Activated CD8-positive, alpha-beta T cell treated with anti-CD3 and anti-CD28 coated beads for 36 hours (primary cell): ENCODE measurements at regions of chr7 and their contacts with region 1.

Region 1: DNA sequence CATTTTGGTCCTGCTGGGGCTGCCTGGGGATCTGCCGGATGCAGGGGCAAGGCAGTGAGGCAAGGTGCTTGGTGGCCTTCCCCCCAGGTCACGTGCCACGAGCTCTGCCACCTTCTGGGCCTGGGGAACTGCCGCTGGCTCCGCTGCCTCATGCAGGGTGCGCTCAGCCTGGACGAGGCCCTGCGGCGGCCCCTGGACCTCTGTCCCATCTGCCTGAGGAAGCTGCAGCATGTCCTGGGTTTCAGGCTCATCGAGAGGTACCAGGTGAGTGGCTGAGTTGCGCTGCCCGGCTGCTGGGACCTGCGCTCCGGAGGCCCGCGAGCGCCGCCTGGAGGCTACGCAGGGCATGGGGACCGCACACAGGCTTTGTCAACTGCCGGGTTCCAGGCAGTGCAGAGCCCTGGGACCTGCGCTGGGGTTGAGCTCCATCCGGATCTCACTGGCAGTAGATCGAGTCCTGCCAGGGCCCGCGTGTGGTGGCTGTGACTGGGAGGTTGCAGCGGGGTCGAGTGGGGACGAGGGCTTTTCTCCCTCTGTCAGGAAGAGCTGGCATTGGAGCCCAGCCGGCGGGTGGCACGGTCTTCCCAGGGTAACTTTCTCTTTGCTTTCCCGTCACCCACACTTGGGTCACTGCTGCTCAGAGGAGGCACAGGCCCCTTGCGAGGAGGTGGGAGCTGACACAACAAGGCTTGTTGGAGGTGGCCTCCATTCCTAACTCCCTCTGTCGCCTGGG is 21.7 kb downstream of the AMZ1 start:
- DNase-seq: peak; percentile 88
- ATAC-seq: peak; percentile 90
- H3K4me3 Mint-ChIP-seq: peak overlapping the region; percentile 59
- H3K27ac Mint-ChIP-seq: peak overlapping the region; percentile 55
- H3K4me1 Mint-ChIP-seq: peaks cover 31% of the 10 kb centered on the region
- H3K27me3 Mint-ChIP-seq: peaks cover 14% of the 10 kb centered on the region
- CTCF ChIP-seq: peak; percentile 97

Region 2: DNA sequence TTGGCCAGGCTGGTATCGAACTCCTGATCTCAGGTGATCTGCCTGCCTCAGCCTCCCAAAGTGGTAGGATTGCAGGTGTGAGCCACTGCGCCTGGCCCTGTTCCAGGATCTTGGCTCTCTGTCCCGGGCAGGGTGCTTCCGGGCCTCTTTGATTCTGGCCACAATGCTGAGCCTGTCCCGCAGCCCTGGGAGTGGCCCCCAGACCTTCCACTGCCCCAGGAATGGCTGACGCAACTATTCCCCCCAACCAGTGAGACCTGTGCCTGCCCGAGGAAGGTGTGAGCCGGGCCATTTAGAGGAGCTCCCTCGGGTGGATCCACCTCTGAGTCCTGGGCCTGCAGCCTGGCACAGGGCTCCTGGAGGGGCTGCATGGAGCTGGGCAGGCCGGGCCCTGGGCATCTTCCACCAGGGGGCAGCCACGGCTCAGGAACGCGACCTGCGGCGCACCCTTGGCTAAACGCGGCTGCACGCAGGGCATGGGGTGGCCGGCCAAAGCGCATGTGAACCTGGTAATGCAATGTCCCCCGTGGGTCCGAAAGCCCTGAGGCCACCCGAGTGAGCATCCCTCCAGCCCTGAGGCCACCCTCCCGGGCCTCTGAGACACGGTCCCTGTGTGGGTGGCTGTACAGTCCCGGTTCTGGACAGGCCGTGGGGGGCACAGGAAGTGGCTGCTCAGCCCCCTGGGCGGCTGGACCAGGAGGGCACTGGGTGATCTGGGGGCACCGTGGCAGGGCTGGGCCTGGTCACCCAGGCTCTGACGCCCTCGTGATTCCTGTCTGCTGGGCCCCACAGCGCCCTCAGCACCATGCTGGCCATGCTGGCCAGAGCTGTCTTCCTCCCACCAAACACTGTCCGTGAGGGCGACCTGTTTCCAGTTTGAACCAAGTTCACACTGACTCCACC is 258.3 kb before region 1 on chr7:
- CTCF ChIA-PET with region 1: interaction called, 22 read pairs
- POLR2A ChIA-PET with region 1: no interaction called
- intact Hi-C with region 1: no loop called
- DNase-seq: peak; percentile 88
- ATAC-seq: peak; percentile 96
- H3K4me3 Mint-ChIP-seq: peak overlapping the region; percentile 49
- H3K27ac Mint-ChIP-seq: peak overlapping the region; percentile 46
- H3K4me1 Mint-ChIP-seq: peaks cover 6% of the 10 kb centered on the region
- H3K27me3 Mint-ChIP-seq: peaks cover 2% of the 10 kb centered on the region
- CTCF ChIP-seq: peak; percentile 79

Region 3: DNA sequence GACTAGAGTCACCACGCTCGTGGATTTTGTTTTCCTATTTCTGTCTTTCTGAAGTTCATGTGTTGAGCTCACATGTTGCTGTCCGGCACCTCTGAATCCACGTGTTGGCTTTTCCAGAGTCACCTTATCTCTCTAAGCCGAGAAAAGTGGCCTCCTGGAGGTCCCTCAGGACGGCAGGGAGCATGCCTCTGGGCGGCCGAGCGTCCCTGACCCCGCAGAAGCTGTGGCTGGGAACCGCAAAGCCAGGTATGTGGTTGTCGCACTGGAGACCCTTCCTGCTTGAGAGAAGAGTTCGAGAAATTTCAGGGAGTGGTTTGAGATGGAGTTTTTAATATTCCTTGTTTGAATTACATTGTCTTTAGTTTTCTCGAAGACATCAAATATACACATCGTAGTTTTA is 138.3 kb before region 1 on chr7:
- CTCF ChIA-PET with region 1: no interaction called
- POLR2A ChIA-PET with region 1: no interaction called
- intact Hi-C with region 1: no loop called
- DNase-seq: no peak
- ATAC-seq: no peak
- H3K4me3 Mint-ChIP-seq: no peak overlapping the region
- H3K27ac Mint-ChIP-seq: no peak overlapping the region
- H3K4me1 Mint-ChIP-seq: peaks cover 6% of the 10 kb centered on the region
- H3K27me3 Mint-ChIP-seq: no peaks in the 10 kb centered on the region
- CTCF ChIP-seq: no peak

Region 4: DNA sequence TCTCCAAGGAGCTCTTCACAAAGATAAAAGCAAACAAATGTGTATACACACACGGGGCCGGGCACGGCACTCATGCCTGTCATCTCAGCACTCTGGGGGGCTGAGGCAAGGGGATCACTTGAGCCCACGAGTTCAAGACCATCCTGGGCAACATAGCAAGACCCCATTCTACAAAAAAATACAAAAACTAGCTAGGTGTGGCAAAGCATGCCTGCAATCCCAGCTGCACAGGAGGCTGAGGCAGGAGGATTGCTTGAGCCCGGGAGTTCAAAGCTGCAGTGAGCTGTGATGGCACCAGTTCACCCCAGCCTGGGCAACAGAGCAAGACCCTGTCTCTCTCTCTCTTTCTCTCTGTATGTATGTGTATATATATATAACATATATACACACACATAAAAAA is 55.7 kb before region 1 on chr7:
- CTCF ChIA-PET with region 1: interaction called, 12 read pairs
- POLR2A ChIA-PET with region 1: no interaction called
- intact Hi-C with region 1: no loop called
- DNase-seq: no peak
- ATAC-seq: no peak
- H3K4me3 Mint-ChIP-seq: no peak overlapping the region
- H3K27ac Mint-ChIP-seq: no peak overlapping the region
- H3K4me1 Mint-ChIP-seq: no peaks in the 10 kb centered on the region
- H3K27me3 Mint-ChIP-seq: no peaks in the 10 kb centered on the region
- CTCF ChIP-seq: no peak

Region 5: GRCh38 chr7:2680792-2681490 is 28.8 kb before region 1 on chr7:
- CTCF ChIA-PET with region 1: interaction called, 249 read pairs
- POLR2A ChIA-PET with region 1: no interaction called
- intact Hi-C with region 1: no loop called
- DNase-seq: peak; percentile 72
- ATAC-seq: peak; percentile 64
- H3K4me3 Mint-ChIP-seq: no peak overlapping the region
- H3K27ac Mint-ChIP-seq: no peak overlapping the region
- H3K4me1 Mint-ChIP-seq: no peaks in the 10 kb centered on the region
- H3K27me3 Mint-ChIP-seq: peaks cover 5% of the 10 kb centered on the region
- CTCF ChIP-seq: peak; percentile 70

Region 6: DNA sequence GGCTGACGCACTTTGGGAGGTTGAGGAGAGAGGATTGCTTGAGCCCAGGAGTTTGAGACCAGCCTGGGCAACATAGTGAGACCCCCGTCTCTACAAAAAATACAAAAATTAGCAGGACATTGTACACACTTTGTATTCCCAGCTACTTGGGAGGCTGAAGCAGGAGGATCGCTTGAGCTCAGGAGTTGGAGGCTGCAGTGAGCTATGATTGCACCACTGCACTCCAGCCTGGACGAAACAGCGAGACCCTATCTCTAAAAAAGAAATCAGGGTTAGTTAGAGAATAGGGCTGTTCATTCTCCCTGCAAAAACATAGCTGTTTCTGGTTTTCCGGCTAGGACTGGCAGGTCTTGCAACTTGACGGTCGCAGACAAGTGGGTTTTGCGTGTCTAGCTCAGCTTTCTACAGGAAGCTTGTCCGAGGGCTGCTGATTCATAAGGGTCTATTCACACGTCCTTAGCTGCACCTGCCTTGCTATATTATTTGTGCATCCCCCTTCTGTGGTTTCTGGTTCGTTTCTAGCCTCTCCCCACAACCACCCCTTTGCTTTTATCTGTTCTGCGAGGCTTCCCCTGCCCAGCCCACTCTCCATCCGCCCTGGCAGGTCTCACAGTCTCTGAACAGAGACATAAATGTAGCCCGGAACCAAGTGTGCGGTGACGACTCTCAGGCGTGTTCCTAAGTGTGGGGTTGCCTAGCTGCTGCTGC is 11.0 kb before region 1 on chr7:
- CTCF ChIA-PET with region 1: interaction called, 92 read pairs
- POLR2A ChIA-PET with region 1: interaction called, 17 read pairs
- intact Hi-C with region 1: no loop called
- DNase-seq: peak; percentile 94
- ATAC-seq: peak; percentile 94
- H3K4me3 Mint-ChIP-seq: no peak overlapping the region
- H3K27ac Mint-ChIP-seq: peak overlapping the region; percentile 54
- H3K4me1 Mint-ChIP-seq: peaks cover 23% of the 10 kb centered on the region
- H3K27me3 Mint-ChIP-seq: peaks cover 10% of the 10 kb centered on the region
- CTCF ChIP-seq: no peak

Region 7: DNA sequence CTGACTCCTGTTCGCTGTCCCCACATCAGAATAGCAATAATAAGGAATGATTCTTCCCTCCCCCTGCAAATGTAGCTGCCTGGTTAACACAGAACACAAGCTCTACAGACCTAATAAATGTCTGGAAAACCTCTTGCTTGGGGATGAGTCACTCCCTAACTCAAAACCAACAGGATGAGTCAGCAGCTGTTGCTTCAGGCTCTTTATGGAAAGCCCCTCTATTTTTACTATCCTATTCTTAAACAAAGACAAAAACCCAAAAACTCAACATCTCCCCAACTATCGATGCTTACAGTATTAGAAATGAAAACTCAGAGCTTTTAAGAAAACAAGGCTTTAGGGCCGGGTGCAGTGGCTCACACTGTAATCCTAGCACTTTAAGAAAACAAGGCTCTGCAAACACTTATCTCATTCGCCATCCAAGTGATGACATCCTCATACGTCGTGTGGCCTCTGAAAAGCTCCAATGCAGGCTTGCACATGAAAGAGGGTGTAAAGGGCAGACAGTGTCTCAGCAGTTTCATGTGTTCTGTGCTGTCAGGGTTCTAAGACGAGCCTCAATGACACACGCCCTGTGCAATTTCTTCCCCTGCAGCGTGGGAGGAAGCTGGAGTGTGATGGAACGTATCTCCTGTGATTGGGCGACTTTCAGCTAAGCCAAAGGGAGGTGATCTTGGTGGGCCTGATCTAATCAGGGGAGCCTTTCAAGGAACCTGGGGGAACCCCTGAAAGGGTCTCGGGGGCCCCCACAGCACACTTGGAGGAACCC is 48.4 kb after region 1 on chr7:
- CTCF ChIA-PET with region 1: interaction called, 10 read pairs
- POLR2A ChIA-PET with region 1: no interaction called
- intact Hi-C with region 1: no loop called
- DNase-seq: peak; percentile 92
- ATAC-seq: peak; percentile 96
- H3K4me3 Mint-ChIP-seq: peak overlapping the region; percentile 67
- H3K27ac Mint-ChIP-seq: peak overlapping the region; percentile 98
- H3K4me1 Mint-ChIP-seq: peaks cover 43% of the 10 kb centered on the region
- H3K27me3 Mint-ChIP-seq: no peaks in the 10 kb centered on the region
- CTCF ChIP-seq: no peak